ENCODE measurements at regions of chr2 and their contacts with region 1.

Region 1: GRCh38 chr2:24287171-24287570 is 73.2 kb downstream of the ITSN2 start:
- DNase-seq: no peak
- H3K4me3 ChIP-seq: no peak overlapping the region
- CTCF ChIP-seq: no peak
- POLR2A ChIP-seq: no peak

Region 2: DNA sequence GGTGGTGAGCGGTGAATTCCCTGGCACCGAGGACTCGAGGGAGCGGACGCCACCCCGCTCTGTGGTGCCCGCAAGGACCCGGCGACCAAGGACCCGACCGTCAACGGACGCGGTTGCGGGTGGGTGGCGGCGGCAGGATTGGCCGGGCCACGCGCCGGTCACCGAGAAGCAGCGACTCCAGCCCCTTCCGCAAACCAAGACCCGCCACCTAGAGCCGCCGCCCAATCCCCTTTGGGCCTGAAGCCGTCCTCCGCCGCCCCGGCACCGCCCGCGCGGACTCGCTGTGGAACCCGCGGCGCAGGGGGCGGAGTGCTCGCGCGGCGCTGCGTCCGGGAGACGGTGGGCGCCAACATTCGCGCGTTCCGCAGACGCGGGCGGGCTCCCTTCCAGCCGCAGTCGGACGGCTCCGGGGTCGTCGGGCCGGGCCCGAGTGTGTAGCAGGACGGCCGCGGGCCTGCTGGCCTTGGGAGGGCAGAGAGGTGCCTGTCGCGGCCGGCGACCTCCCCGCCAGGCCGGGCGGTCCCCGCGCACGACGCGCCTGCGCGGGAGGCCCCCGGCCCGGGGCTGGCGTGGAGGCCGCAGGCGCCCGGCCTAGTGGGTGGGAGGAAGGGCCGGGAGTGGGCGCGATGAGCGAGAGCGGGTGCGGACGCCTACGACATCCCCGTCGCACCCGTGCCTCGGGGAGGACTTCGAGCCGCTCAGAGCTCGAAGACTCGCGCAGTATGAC is 163.8 kb before region 1 on chr2 and contains the starts of genes FAM228B and PFN4:
- intact Hi-C with region 1: no loop called
- DNase-seq: peak; percentile 70 to 97
- H3K4me3 ChIP-seq: peak within 1 kb of the TSS; percentile 63
- CTCF ChIP-seq: no peak
- POLR2A ChIP-seq: no peak
- total RNA-seq, gene FAM228B: 2.8 to 15.1 (median 4.6) TPM
- total RNA-seq, gene PFN4: 0.65 TPM in 1 of 4 donors, not detected in the others

Region 3: DNA sequence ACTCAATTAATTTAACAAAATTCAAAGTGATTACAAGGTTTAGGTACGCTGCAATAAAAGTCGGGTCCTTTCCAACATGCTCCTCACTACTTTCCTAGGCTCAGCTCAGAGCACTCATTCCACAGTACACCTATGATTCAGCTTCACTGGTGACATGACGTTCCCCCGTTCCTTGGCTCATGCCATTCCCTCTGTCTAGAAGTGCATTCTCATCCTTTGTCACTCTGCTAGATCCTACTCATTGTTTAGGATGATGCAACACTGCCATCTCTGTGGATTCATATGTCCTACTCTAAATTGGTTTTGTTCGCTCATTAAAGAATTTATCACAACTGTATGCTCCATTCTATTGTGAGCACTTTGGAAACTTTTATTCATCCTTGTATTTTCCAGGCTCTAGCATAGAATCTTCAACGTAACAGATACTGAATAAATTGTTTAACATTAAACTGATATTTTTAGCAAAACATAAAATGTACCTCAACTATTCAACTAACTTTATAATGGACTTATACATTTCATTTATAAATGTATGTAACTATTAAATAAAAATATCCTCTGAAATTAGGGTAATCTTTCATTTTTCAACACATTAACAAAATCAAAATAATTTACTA is 33.8 kb before region 1 on chr2:
- intact Hi-C with region 1: no loop called
- DNase-seq: no peak
- H3K4me3 ChIP-seq: no peak overlapping the region
- CTCF ChIP-seq: no peak
- POLR2A ChIP-seq: no peak

Region 4: DNA sequence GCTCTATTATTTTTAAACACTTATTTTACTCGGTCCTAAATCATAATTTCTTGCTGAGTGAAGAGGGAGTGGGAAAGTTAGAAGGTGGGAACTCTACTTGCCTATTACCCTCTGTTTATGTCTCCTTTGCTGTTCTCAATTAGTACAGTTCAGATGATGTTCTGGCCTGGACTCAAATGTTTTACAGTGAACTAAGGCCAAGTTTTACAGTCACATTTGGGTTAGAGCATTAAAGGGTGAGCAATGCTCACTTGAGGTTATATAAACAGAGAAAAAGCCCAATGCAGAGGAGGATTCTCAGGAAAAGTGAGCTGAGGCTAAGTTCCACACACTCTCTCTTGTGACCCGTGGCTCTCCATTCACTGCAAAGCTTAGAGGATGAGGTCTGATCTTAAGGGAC is 20.8 kb after region 1 on chr2:
- intact Hi-C with region 1: loop called (anchors 2 kb)
- DNase-seq: no peak
- H3K4me3 ChIP-seq: no peak overlapping the region
- CTCF ChIP-seq: no peak
- POLR2A ChIP-seq: no peak